Activated CD4-positive, alpha-beta memory T cell treated with anti-CD3 and anti-CD28 coated beads, Interleukin-2, amount 10 ng/mL, durations not matched to agents 7 days and 5 days (primary cell): ENCODE measurements at regions of chr16 and their contacts with region 1.

Region 1: DNA sequence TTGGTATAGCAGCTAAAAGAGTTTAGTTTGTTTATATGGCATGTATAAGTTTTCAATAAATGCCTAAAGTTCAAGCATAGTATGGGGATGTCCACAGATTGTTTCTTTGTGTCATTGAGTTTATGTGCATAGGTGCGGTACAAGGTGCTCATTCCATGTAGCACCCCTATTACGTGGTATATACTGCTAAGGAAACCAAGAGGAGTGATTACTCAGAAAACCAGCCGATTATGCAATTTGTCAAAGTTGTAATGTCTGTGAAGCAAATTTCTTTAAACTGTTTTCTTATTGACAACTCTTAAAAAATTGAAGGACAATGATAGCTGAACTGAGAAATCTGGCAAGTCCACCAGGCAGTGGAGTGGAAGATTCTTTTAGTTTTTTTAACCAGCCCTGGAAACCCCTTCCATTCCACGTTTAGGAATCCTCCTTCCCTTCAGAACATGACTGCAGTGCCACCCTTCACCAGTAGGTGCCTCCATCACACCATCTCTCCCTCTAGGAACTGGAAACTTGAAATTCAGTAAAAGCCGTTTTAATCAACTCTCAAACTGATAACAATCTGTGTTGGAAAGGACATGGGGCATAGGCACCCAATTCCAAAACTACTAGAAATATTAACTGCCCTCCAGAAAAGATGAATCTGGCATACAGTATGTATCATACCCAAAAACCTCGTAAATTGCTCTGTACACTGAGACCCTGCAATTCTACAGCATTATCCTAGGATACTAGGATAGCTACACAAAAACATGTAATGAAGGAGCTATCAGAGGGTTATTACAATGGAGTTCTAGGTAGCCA is 43.5 kb downstream of the REXO5 start:
- DNase-seq: peak; percentile 69
- H3K4me3 Mint-ChIP-seq: no peak overlapping the region
- H3K27ac Mint-ChIP-seq: no peak overlapping the region
- H3K4me1 Mint-ChIP-seq: peaks cover 46% of the 10 kb centered on the region
- H3K27me3 Mint-ChIP-seq: no peaks in the 10 kb centered on the region

Region 2: DNA sequence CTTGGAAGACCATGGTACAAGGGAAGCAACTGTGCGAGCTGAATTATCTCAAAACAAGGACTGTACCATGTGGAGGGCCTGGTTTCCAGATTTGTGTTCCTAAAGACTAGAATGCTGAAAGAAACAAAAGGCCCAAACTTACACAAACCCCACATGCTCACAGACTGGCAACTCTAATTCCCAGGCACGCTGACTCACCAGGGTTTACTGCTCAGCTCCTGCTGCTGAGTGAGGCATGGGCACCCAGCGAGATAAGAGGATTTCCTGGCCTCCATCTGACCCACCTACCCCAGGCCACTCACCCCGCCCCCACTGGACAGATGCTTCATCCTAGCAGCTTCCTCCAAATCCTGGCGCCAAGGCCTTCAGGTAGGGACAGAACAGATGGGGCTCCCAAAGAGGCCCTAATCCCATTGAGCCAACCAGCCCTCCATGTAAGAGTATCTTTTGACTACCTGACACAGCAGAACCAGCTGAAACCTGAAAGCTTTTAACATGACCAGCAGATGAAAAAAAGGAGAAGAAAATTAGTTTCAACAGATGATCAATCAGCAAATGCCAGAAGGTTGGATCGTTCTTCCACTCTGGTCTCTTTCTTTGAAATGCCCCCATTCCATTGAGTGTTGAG is 16.5 kb after region 1 on chr16:
- CTCF ChIA-PET with region 1: interaction called, 12 read pairs
- POLR2A ChIA-PET with region 1: no interaction called
- DNase-seq: no peak
- H3K4me3 Mint-ChIP-seq: no peak overlapping the region
- H3K27ac Mint-ChIP-seq: peak overlapping the region; percentile 78
- H3K4me1 Mint-ChIP-seq: peaks cover 63% of the 10 kb centered on the region
- H3K27me3 Mint-ChIP-seq: no peaks in the 10 kb centered on the region

Region 3: GRCh38 chr16:20887207-20887606 is 37.4 kb after region 1 on chr16:
- CTCF ChIA-PET with region 1: interaction called, 11 read pairs
- POLR2A ChIA-PET with region 1: no interaction called
- DNase-seq: no peak
- H3K4me3 Mint-ChIP-seq: no peak overlapping the region
- H3K27ac Mint-ChIP-seq: no peak overlapping the region
- H3K4me1 Mint-ChIP-seq: peaks cover 52% of the 10 kb centered on the region
- H3K27me3 Mint-ChIP-seq: no peaks in the 10 kb centered on the region

Region 4: DNA sequence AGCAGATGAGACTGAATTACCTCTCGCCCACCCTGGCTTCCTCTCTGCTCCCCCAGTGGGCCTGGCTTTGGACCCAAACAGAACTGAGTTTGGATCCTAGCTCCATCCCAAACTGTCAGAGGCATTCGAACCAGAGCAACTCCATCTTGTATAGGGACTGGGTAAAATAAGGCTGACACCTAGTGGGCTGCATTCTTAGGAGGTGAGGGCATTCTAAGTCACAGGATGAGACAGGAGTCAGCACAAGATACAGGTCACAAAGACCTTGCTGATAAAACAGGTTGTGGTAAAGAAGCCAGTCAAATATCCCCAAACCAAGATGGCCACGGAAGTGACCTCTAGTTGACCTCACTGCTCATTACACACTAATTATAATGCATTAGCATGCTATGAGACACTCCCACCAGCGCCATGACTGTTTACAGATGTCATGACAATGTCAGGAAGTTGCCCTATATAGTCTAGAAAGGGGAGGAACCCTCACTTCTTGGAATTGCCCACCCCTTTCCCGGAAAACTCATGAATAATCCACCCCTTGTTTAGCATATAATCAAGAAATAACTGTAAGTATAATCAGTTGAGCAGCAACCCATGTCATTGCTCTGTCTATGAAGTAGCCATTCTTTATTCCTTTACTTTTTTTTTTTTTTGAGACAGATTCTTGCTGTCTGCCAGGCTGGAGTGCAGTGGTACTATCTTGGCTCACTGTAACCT is 95.2 kb after region 1 on chr16:
- CTCF ChIA-PET with region 1: interaction called, 14 read pairs
- POLR2A ChIA-PET with region 1: no interaction called
- DNase-seq: peak; percentile 83
- H3K4me3 Mint-ChIP-seq: no peak overlapping the region
- H3K27ac Mint-ChIP-seq: peak overlapping the region; percentile 71
- H3K4me1 Mint-ChIP-seq: peaks cover 57% of the 10 kb centered on the region
- H3K27me3 Mint-ChIP-seq: peaks cover 2% of the 10 kb centered on the region

Region 5: DNA sequence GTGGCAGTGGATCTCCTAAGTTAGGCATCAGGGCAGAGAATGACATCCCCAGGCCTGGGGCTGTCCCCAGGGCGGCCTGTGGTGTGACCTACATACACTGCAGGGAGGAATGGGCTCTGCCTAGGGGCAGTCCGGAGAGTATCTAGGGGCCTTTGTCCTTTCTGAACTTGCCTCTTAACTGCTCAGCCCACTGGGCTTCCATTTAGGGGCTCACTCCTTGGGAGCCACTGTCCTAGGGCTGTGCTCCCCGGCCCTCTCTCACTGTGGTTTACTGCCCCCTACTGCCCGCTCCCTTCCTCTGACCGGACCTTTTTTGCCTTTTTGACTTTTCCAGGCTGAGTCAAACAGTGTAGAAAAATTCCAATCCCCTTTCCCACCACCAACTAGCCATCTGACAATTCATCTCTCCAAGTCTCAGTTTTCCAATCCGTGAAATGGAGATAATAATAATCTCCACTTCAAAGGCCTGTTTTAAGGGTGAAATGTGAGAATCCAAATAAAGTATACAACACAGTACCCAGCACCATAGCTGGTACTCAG is 234.0 kb after region 1 on chr16:
- CTCF ChIA-PET with region 1: interaction called, 23 read pairs
- POLR2A ChIA-PET with region 1: interaction called, 4 read pairs
- DNase-seq: peak; percentile 63
- H3K4me3 Mint-ChIP-seq: no peak overlapping the region
- H3K27ac Mint-ChIP-seq: no peak overlapping the region
- H3K4me1 Mint-ChIP-seq: peaks cover 2% of the 10 kb centered on the region
- H3K27me3 Mint-ChIP-seq: peaks cover 14% of the 10 kb centered on the region